ENCODE measurements at regions of chr10 and their contacts with region 1.

Region 1: GRCh38 chr10:50224330-50224952 is 26.9 kb downstream of the ASAH2 start:
- DNase-seq: peak in 2 of 5 donors; percentile 6 to 27
- ATAC-seq: peak in 3 of 4 donors; percentile 60 to 61 (median 60)
- H3K4me3 ChIP-seq: no peak overlapping the region
- H3K27ac ChIP-seq: no peak overlapping the region
- H3K4me1 ChIP-seq: no peaks in the 10 kb centered on the region
- H3K27me3 ChIP-seq: peaks cover 0 to 6% (median 0%) of the 10 kb centered on the region in 9 donors
- CTCF ChIP-seq: peak in 11 of 12 donors; percentile 20 to 57 (median 43)
- POLR2A ChIP-seq: no peak

Region 2: DNA sequence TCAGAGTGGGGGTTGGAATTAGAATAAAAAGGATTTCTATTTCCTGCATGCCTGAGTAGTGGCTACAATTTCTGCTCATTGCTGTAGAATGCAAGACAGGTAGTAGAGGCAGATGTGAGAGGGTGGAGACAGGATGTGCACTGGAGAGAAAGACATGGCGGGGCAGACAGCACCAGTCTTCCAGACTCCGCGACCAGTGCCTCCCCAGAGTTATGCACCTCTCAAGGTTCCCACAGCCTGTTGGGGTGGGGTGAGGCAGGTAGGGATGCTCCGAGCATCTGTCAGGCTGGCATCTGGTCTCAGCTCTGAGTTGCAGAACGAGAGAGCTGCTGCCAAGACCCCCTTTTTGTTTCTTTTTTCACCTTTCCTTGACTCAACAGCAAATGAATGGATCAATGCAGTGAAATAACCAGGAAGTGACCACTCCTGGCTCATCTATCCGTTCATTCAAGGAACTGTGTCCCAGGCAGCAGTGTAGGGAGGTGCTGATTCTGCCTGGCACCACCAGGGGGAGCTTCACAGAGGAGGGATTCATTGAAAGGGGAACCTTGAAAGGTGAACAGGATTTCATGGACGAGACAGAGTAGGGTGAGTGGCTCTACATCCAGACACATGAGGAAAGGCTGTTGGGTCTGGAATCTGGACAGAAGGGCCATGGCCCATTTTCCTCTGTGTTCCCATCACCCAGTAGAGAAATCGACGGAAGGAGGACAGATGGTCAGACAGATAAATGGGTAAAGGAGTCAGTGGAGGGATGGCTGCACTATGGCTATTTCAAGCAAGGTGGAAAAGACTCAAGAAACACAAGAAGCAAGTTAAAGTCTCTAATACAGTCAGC is 631.5 kb before region 1 on chr10:
- intact Hi-C with region 1: loop called in 8 of 10 experiments (anchors 5 to 10 kb)
- DNase-seq: peak in 3 of 5 donors; percentile 41 to 48 (median 46)
- ATAC-seq: peak; percentile 62 to 79 (median 70)
- H3K4me3 ChIP-seq: no peak overlapping the region
- H3K27ac ChIP-seq: no peak overlapping the region
- H3K4me1 ChIP-seq: no peaks in the 10 kb centered on the region
- H3K27me3 ChIP-seq: peaks cover 0 to 26% (median 0%) of the 10 kb centered on the region in 9 donors
- CTCF ChIP-seq: peak; percentile 74 to 92 (median 84)
- POLR2A ChIP-seq: no peak

Region 3: GRCh38 chr10:49598986-49599385 is 625.5 kb before region 1 on chr10:
- intact Hi-C with region 1: loop called in 8 of 10 experiments (anchors 5 to 10 kb)
- DNase-seq: no peak
- ATAC-seq: no peak
- H3K4me3 ChIP-seq: no peak overlapping the region
- H3K27ac ChIP-seq: no peak overlapping the region
- H3K4me1 ChIP-seq: no peaks in the 10 kb centered on the region
- H3K27me3 ChIP-seq: peaks cover 0 to 57% (median 0%) of the 10 kb centered on the region in 9 donors
- CTCF ChIP-seq: no peak
- POLR2A ChIP-seq: no peak